Naive thymus-derived CD8-positive, alpha-beta T cell (primary cell): ENCODE measurements at regions of chr9 and their contacts with region 1.

Region 1: GRCh38 chr9:72364679-72365524 is at the start of gene ZFAND5:
- DNase-seq: peak; percentile 88 to 96 (median 92)
- ATAC-seq: peak; percentile 77 to 79
- H3K4me3 Mint-ChIP-seq: peak within 1 kb of the TSS; percentile 93 to 98 (median 95)
- H3K27ac Mint-ChIP-seq: peak within 1 kb of the TSS; percentile 98 to 99 (median 99)
- H3K4me1 Mint-ChIP-seq: peaks cover 21 to 42% (median 38%) of the 10 kb centered on the region in 4 donors
- H3K27me3 Mint-ChIP-seq: no peaks in the 10 kb centered on the region
- polyA plus RNA-seq, gene ZFAND5: 47.2 to 70.8 (median 51.8) TPM

Region 2: DNA sequence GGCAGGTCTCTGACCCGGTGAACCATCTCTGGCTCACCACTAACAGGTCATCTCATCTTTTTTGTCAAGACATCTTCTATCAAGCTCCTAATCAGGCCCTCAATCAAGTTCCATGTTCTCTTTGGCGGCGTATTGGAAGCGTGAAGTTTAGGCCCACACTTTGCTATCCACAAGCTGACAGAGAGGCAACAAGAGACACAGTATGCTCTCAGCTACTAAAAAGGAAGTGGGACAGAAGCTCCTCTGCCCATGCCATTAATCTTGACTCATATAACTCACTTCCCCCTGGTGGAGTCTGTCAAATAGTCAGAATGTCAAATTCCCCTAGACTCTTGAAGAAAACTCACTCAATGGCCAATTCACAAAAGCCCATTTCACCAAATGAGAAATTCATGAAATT is 79.0 kb after region 1 on chr9:
- POLR2A ChIA-PET with region 1: interaction called, 10 read pairs
- DNase-seq: no peak
- ATAC-seq: peak; percentile 57 to 60
- H3K4me3 Mint-ChIP-seq: peak overlapping the region in 2 of 10 donors; percentile 35 to 36
- H3K27ac Mint-ChIP-seq: peak overlapping the region in 5 of 10 donors; percentile 4 to 84 (median 65)
- H3K4me1 Mint-ChIP-seq: peaks cover 9 to 49% (median 15%) of the 10 kb centered on the region in 4 donors
- H3K27me3 Mint-ChIP-seq: peaks cover 0 to 2% (median 0%) of the 10 kb centered on the region in 5 donors

Region 3: GRCh38 chr9:72526901-72527800 is 162.2 kb after region 1 on chr9:
- POLR2A ChIA-PET with region 1: interaction called, 41 read pairs
- DNase-seq: peak; percentile 53 to 90 (median 72)
- ATAC-seq: peak; percentile 87 to 91
- H3K4me3 Mint-ChIP-seq: peak overlapping the region; percentile 80 to 98 (median 88)
- H3K27ac Mint-ChIP-seq: peak overlapping the region; percentile 91 to 99 (median 95)
- H3K4me1 Mint-ChIP-seq: peaks cover 14 to 35% (median 27%) of the 10 kb centered on the region in 4 donors
- H3K27me3 Mint-ChIP-seq: no peaks in the 10 kb centered on the region

Region 4: GRCh38 chr9:72839085-72839484 is 474.2 kb after region 1 on chr9:
- POLR2A ChIA-PET with region 1: no interaction called
- DNase-seq: no peak
- ATAC-seq: no peak
- H3K4me3 Mint-ChIP-seq: no peak overlapping the region
- H3K27ac Mint-ChIP-seq: no peak overlapping the region
- H3K4me1 Mint-ChIP-seq: no peaks in the 10 kb centered on the region
- H3K27me3 Mint-ChIP-seq: peaks cover 0 to 8% (median 5%) of the 10 kb centered on the region in 5 donors